ENCODE measurements at regions of chr13 and their contacts with region 1.

Region 1: GRCh38 chr13:93859716-93860115 is 619.8 kb downstream of the DCT start:
- DNase-seq: no peak
- H3K4me3 ChIP-seq: no peak overlapping the region
- H3K27ac ChIP-seq: no peak overlapping the region
- H3K4me1 ChIP-seq: no peaks in the 10 kb centered on the region
- H3K27me3 ChIP-seq: no peaks in the 10 kb centered on the region
- CTCF ChIP-seq: no peak
- POLR2A ChIP-seq: no peak

Region 2: DNA sequence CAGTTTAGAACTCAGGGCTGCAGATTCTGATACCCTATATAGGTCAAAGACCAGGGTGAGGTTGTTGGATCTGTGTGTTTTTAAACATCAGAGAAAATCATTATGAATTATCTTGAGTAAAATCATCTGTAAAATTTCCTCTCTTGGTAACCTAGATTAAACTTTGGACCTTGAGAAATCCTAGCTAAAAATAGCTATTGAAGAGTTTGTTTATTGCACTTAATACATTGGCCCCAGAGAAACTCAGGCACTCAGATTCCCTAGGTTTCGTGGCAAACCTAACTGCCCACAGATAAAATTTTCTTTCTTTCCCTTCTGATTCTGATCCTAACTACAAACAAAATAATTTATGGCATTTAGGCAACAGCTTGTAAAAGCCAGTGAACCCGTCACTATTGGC is 530.8 kb before region 1 on chr13:
- intact Hi-C with region 1: no loop called
- DNase-seq: no peak
- H3K4me3 ChIP-seq: no peak overlapping the region
- H3K27ac ChIP-seq: no peak overlapping the region
- H3K4me1 ChIP-seq: peaks cover 10% of the 10 kb centered on the region
- H3K27me3 ChIP-seq: no peaks in the 10 kb centered on the region
- CTCF ChIP-seq: no peak
- POLR2A ChIP-seq: no peak

Region 3: GRCh38 chr13:93847173-93847572 is 12.5 kb before region 1 on chr13:
- intact Hi-C with region 1: loop called (anchors 1 kb)
- DNase-seq: no peak
- H3K4me3 ChIP-seq: no peak overlapping the region
- H3K27ac ChIP-seq: no peak overlapping the region
- H3K4me1 ChIP-seq: no peaks in the 10 kb centered on the region
- H3K27me3 ChIP-seq: no peaks in the 10 kb centered on the region
- CTCF ChIP-seq: no peak
- POLR2A ChIP-seq: no peak

Region 4: DNA sequence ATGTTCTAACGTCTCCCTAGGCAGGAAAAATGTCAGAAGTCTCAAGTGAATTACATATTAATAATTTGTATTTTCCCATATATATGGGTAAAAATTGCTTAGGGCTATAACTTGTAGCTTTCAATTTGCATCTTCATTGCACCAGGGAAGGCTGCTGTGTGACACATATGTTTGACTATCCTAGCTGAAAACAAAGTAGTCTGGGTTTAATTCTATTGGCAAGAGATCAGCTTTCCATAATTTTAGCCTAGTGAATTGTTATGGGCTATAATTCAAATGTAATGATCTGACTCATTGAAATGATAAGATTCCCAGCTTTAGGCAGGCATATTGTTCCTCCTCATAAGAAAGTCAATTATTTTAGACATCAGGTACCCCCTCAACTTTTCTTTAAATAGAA is 66.7 kb after region 1 on chr13:
- intact Hi-C with region 1: no loop called
- DNase-seq: no peak
- H3K4me3 ChIP-seq: no peak overlapping the region
- H3K27ac ChIP-seq: no peak overlapping the region
- H3K4me1 ChIP-seq: no peaks in the 10 kb centered on the region
- H3K27me3 ChIP-seq: no peaks in the 10 kb centered on the region
- CTCF ChIP-seq: no peak
- POLR2A ChIP-seq: no peak